Left lung (tissue), 14 donors: ENCODE measurements at regions of chr17 and their contacts with region 1.

Region 1: DNA sequence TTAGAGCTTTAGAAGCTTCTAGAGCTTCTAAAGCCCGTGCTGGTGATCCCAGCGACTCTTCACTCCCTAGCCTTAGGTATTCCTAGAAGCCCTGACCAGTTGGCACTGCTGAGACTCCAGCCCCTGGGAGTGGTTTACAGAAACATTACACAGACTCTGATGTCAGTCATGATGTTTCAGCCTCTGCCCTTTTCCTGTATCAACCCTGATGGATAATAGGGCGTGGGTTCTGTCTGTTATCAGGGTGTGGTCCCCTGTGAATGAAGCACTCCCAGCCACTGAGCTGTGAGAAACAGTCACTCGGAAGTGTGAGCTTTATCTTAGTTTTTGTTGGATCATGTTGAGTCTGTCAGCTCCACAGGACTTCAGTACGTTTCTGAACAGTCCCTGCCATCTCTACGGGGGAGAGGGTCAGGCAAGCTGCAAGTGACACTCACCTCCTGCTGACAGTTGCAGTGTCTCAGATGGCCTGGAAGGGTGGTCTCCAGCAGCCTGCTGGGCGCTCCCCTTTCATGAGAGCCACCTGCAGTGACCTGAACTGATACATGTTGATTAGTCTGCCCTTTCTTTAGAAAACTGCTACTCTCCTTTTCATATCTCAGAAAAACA is 12.8 kb downstream of the GOSR2 start:
- DNase-seq: no peak
- ATAC-seq: no peak
- H3K4me3 ChIP-seq: no peak overlapping the region
- H3K27ac ChIP-seq: peak overlapping the region in 1 of 2 donors; percentile 15
- H3K4me1 ChIP-seq: no peaks in the 10 kb centered on the region
- H3K27me3 ChIP-seq: no peaks in the 10 kb centered on the region
- CTCF ChIP-seq: no peak

Region 2: DNA sequence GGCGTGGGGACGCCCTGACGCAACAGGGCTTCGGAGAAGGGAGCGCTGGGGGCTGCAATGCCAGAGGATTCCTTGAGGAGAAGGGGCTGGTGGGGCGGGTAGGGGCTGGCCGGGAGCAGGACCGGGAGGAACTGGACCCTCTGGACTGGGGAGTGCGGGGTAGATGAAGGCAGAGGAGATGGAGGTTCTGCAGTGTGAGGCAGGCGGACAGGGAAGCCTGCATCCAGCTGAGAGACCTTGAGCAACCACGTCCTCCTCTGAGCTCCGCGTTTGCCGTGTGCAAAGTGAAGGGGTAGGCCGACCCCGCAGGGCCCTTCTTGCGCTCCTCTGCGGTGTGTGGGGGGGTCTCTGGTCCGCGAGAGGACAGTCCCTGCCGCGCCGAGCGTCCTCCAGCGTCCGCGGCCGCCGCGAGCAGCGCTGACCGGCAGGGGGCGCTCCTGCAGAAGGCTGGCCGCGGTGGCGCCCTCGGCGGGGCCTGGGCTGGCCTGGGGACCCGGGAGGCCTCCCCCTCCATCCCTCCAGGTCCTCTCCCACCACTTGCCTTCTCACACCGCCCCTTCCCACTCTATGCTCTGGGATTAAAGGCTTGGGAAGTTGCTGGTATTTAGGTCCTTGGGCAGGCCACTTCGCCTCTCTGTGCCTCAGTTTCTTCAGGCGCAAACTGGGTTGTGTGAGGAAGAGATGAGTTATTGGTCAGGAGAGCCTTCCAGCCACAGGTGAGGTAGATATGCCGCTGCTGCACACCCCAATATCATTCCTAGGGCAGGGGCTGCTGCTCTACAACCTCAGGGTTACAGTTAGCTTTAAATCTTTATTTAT is 94.0 kb before region 1 on chr17:
- intact Hi-C with region 1: loop called in 1 of 2 experiments (anchors 10 kb)
- DNase-seq: peak in 1 of 4 donors; percentile 84
- ATAC-seq: peak; percentile 89
- H3K4me3 ChIP-seq: no peak overlapping the region
- H3K27ac ChIP-seq: no peak overlapping the region
- H3K4me1 ChIP-seq: peaks cover 0 to 6% of the 10 kb centered on the region in 2 donors
- H3K27me3 ChIP-seq: peaks cover 10 to 66% of the 10 kb centered on the region in 2 donors
- CTCF ChIP-seq: peak; percentile 81 to 87

Region 3: GRCh38 chr17:46979147-46979863 is 43.5 kb after region 1 on chr17 and contains the start of gene RPRML:
- intact Hi-C with region 1: no loop called
- DNase-seq: peak in 1 of 4 donors; percentile 16
- ATAC-seq: peak; percentile 69
- H3K4me3 ChIP-seq: peak within 1 kb of the TSS; percentile 30 to 45
- H3K27ac ChIP-seq: no peak within 1 kb of the TSS
- H3K4me1 ChIP-seq: peaks cover 12 to 15% of the 10 kb centered on the region in 2 donors
- H3K27me3 ChIP-seq: peaks cover 36 to 75% of the 10 kb centered on the region in 2 donors
- CTCF ChIP-seq: no peak
- polyA plus RNA-seq, gene RPRML: not detected